HepG2 (cell line): ENCODE measurements at regions of chr10 and their contacts with region 1.

Region 1: GRCh38 chr10:44386546-44387052 is 1.7 kb upstream of the CXCL12 start:
- DNase-seq: peak; percentile 35
- ATAC-seq: peak; percentile 96
- H3K4me3 ChIP-seq: peak overlapping the region in 1 of 3 experiments; percentile 43; a peak in 1 of 6 replicates
- H3K27ac ChIP-seq: no peak overlapping the region
- H3K4me1 ChIP-seq: peaks cover 12% of the 10 kb centered on the region
- H3K27me3 ChIP-seq: no peaks in the 10 kb centered on the region
- CTCF ChIP-seq: peak; percentile 88
- EP300 ChIP-seq: 0 out of 4 replicates have a peak, but pooled peaks of 1 of the 2 experiments have one; percentile 20
- POLR2A ChIP-seq: no peak
- RAD21 ChIP-seq: peak; percentile 98

Region 2: GRCh38 chr10:43671656-43672531 is 714.7 kb before region 1 on chr10:
- CTCF ChIA-PET with region 1: interaction called, 5 read pairs
- POLR2A ChIA-PET with region 1: no interaction called
- in situ Hi-C with region 1: loop called (anchors 5 kb)
- intact Hi-C with region 1: loop called (anchors 1 kb)
- DNase-seq: peak; percentile 69
- ATAC-seq: peak; percentile 94
- H3K4me3 ChIP-seq: no peak overlapping the region
- H3K27ac ChIP-seq: no peak overlapping the region
- H3K4me1 ChIP-seq: no peaks in the 10 kb centered on the region
- H3K27me3 ChIP-seq: peaks cover 0 to 4% of the 10 kb centered on the region in 2 experiments; a peak in 2 of 5 replicates
- CTCF ChIP-seq: peak; percentile 95
- EP300 ChIP-seq: no peak
- POLR2A ChIP-seq: no peak
- RAD21 ChIP-seq: peak; percentile 79

Region 3: DNA sequence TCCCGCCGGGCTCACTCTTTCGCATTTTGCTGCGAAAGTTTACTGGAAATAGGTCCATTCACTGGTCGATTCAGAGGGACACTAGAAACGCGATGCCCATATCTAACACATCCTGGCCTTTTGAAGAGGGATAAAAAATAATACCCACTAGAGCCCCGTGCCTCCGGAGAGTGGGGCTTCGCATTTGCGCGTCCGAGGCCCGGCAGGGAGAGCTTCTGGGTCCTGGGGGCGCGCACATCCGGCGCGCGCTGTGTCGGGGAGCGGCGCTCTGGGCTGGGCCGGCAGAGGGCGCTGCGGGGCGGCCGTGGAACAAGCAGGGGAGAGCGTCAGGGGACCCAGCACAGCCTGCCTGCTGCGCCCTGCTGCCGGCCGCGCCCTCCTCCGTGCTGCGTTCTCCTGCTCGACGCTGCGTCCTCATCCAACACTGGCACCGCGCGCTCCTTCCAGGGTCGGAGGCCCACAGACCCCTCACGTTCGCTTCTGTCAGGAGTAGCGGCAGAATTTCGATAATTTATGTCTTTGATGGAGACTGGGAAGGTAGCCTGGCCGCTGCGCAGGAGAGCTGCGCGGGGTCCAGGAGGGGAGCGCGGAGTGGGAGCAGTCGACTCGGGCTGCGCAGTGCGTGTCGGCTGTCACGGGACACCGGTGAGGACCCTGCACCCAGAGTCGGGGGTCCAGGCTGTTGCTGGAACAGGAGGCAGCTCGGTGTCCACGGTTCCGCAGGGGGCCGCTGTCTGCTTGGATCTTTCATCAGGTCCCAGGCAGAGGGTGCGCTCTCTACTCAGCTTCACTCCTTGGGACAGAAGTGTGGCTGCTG is 696.4 kb before region 1 on chr10:
- CTCF ChIA-PET with region 1: interaction called, 16 read pairs
- POLR2A ChIA-PET with region 1: no interaction called
- in situ Hi-C with region 1: no loop called
- intact Hi-C with region 1: loop called (anchors 1 kb)
- DNase-seq: peak; percentile 27
- ATAC-seq: peak; percentile 99
- H3K4me3 ChIP-seq: peak overlapping the region in 1 of 3 experiments; percentile 24; a peak in 1 of 6 replicates
- H3K27ac ChIP-seq: no peak overlapping the region
- H3K4me1 ChIP-seq: no peaks in the 10 kb centered on the region
- H3K27me3 ChIP-seq: peaks cover 0 to 3% of the 10 kb centered on the region in 2 experiments; a peak in 1 of 5 replicates
- CTCF ChIP-seq: peak; percentile 82
- EP300 ChIP-seq: no peak
- POLR2A ChIP-seq: no peak
- RAD21 ChIP-seq: peak; percentile 92

Region 4: DNA sequence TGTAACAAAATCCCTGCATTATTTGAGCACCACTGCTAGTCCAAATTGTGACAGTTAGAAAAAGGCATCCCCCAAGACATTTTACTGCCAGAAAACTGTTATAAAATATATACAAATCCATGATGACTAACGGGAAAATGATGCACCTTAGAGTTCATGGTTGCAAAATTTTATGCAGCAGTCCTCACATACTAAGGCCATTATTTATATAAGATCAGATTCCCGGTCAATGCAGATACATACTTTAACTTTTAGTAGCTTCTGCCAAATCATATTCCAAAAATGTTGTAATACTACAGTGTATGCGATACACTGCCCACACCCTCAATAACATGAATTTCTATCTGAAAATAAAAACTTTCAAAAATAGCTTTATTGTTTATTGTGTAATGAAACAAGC is 498.0 kb before region 1 on chr10:
- CTCF ChIA-PET with region 1: interaction called, 9 read pairs
- POLR2A ChIA-PET with region 1: no interaction called
- in situ Hi-C with region 1: loop called (anchors 10 kb)
- intact Hi-C with region 1: loop called (anchors 10 kb)
- DNase-seq: no peak
- ATAC-seq: no peak
- H3K4me3 ChIP-seq: no peak overlapping the region
- H3K27ac ChIP-seq: no peak overlapping the region
- H3K4me1 ChIP-seq: no peaks in the 10 kb centered on the region
- H3K27me3 ChIP-seq: no peaks in the 10 kb centered on the region; a peak in 1 of 5 replicates
- CTCF ChIP-seq: no peak
- EP300 ChIP-seq: no peak
- POLR2A ChIP-seq: no peak
- RAD21 ChIP-seq: no peak

Region 5: GRCh38 chr10:43922335-43923280 is 464.0 kb before region 1 on chr10:
- CTCF ChIA-PET with region 1: no interaction called
- POLR2A ChIA-PET with region 1: no interaction called
- in situ Hi-C with region 1: no loop called
- intact Hi-C with region 1: loop called (anchors 10 kb)
- DNase-seq: no peak
- ATAC-seq: no peak; the same call in 2 of the 3 replicates
- H3K4me3 ChIP-seq: no peak overlapping the region
- H3K27ac ChIP-seq: no peak overlapping the region
- H3K4me1 ChIP-seq: no peaks in the 10 kb centered on the region
- H3K27me3 ChIP-seq: peaks cover 0 to 9% of the 10 kb centered on the region in 2 experiments; a peak in 1 of 5 replicates
- CTCF ChIP-seq: peak; percentile 28
- EP300 ChIP-seq: no peak
- POLR2A ChIP-seq: no peak
- RAD21 ChIP-seq: no peak